Activated naive CD4-positive, alpha-beta T cell treated with anti-CD3 and anti-CD28 coated beads for 36 hours (primary cell): ENCODE measurements at regions of chr13 and their contacts with region 1.

Region 1: GRCh38 chr13:31742097-31742734 is 2.9 kb downstream of the RXFP2 start:
- DNase-seq: peak; percentile 72
- H3K4me3 Mint-ChIP-seq: no peak overlapping the region
- H3K27ac Mint-ChIP-seq: no peak overlapping the region
- H3K4me1 Mint-ChIP-seq: peaks cover 2% of the 10 kb centered on the region
- H3K27me3 Mint-ChIP-seq: peaks cover 9% of the 10 kb centered on the region

Region 2: DNA sequence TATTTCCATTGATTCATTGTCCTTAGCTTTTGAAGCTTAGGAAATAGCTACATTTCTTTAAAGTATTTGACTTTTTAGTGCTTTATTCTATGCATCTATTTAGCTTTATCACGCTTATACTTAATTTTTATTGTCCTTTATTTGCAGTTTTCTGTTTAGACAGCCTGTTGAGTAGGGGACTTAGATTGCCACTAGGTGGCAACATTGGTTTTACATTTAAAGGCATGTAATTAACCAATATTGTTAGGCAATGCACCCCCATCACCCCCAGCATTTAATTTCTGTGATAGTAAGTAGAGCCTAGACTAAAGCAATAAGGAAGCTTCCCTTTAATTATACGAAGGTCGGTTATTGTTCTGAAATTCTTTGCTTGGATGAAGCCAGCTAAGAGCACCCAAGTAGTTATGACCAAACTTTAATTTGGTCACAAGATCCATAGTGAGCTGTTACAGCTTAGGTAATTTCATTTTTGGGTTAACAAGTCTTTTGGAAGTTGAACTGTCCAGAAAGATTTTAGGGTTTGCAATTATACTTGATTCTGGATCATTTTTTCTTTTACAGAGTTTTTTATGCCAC is 505.9 kb before region 1 on chr13:
- CTCF ChIA-PET with region 1: interaction called, 3 read pairs
- intact Hi-C with region 1: loop called (anchors 1 kb)
- DNase-seq: no peak
- H3K4me3 Mint-ChIP-seq: no peak overlapping the region
- H3K27ac Mint-ChIP-seq: no peak overlapping the region
- H3K4me1 Mint-ChIP-seq: no peaks in the 10 kb centered on the region
- H3K27me3 Mint-ChIP-seq: no peaks in the 10 kb centered on the region

Region 3: GRCh38 chr13:33610471-33611015 is 1868.3 kb after region 1 on chr13:
- CTCF ChIA-PET with region 1: no interaction called
- intact Hi-C with region 1: no loop called
- DNase-seq: peak; percentile 59
- H3K4me3 Mint-ChIP-seq: peak overlapping the region; percentile 46
- H3K27ac Mint-ChIP-seq: peak overlapping the region; percentile 86
- H3K4me1 Mint-ChIP-seq: peaks cover 40% of the 10 kb centered on the region
- H3K27me3 Mint-ChIP-seq: peaks cover 6% of the 10 kb centered on the region